Activated naive CD4-positive, alpha-beta T cell treated with anti-CD3 and anti-CD28 coated beads for 36 hours (primary cell): ENCODE measurements at regions of chr10 and their contacts with region 1.

Region 1: GRCh38 chr10:95246579-95247051 is 44.2 kb downstream of the PDLIM1 start:
- DNase-seq: peak; percentile 78
- H3K4me3 Mint-ChIP-seq: no peak overlapping the region
- H3K27ac Mint-ChIP-seq: no peak overlapping the region
- H3K4me1 Mint-ChIP-seq: no peaks in the 10 kb centered on the region
- H3K27me3 Mint-ChIP-seq: peaks cover 18% of the 10 kb centered on the region

Region 2: GRCh38 chr10:95133016-95133752 is 113.4 kb before region 1 on chr10:
- CTCF ChIA-PET with region 1: interaction called, 16 read pairs
- intact Hi-C with region 1: loop called (anchors 1 kb)
- DNase-seq: peak; percentile 88
- H3K4me3 Mint-ChIP-seq: no peak overlapping the region
- H3K27ac Mint-ChIP-seq: no peak overlapping the region
- H3K4me1 Mint-ChIP-seq: no peaks in the 10 kb centered on the region
- H3K27me3 Mint-ChIP-seq: no peaks in the 10 kb centered on the region

Region 3: DNA sequence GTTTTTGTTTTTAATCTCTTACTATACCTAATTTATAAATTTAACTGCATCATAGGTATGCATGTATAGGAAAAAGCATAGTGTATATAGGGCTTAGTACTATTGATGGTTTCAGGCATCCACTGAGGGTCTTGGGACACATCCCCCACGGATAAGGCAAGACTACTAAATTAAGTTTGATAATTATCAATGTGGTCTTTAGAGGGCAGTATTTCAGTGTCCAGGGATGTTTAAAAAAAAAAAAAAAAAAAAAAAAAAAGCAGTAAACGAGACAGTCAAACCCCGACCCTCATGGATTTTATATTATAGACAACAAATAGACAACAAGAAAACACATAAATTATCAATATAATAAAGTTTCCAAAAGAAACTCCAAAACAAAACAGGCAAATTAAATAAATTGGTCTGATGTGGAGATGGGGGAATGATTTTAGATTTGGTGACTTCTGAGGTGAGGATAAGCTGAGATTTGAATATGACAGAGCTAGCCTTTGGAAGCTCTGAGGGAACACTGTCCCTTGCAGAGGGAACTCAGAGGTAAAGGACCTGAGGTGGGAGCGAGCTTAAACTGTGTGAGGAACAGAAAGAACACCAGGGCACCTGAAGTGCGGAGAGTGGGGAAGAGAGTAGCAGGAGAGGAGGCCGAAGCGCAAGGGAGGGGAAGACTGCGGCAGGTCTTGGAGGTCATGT is 37.8 kb before region 1 on chr10:
- CTCF ChIA-PET with region 1: interaction called, 3 read pairs
- intact Hi-C with region 1: loop called (anchors 1 kb)
- DNase-seq: no peak
- H3K4me3 Mint-ChIP-seq: no peak overlapping the region
- H3K27ac Mint-ChIP-seq: no peak overlapping the region
- H3K4me1 Mint-ChIP-seq: no peaks in the 10 kb centered on the region
- H3K27me3 Mint-ChIP-seq: peaks cover 3% of the 10 kb centered on the region

Region 4: GRCh38 chr10:95346715-95347401 is 100.2 kb after region 1 on chr10:
- CTCF ChIA-PET with region 1: interaction called, 10 read pairs
- intact Hi-C with region 1: no loop called
- DNase-seq: no peak
- H3K4me3 Mint-ChIP-seq: no peak overlapping the region
- H3K27ac Mint-ChIP-seq: no peak overlapping the region
- H3K4me1 Mint-ChIP-seq: no peaks in the 10 kb centered on the region
- H3K27me3 Mint-ChIP-seq: no peaks in the 10 kb centered on the region

Region 5: DNA sequence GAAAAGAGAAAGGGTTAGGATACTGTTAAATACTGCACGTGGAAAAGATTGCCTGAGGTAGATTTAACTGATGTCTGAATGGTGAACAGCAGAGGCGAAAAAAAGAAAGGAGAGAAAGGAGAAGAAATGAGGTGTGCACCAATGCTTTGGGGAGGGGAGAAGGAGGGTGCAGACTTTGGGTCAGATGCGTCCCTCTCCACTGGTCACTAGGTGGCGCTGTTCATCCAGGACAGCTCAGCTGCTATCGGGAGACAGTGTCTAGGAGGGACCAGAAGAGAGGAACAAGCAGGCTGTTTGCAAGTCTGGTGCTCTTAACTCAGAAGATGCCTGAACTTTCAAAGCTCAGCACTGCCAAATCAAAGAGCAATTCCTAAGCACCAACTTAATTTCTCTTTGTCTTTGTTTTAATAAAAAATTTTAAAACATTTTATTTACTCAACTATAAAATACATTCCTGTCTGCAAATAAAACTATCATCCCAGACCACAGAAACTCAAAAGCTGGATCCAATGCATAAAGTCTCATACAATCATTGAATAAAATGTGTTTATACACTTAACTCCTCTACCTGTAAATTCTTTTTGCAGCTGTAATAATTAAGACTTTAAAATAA is 128.1 kb after region 1 on chr10:
- CTCF ChIA-PET with region 1: interaction called, 11 read pairs
- intact Hi-C with region 1: no loop called
- DNase-seq: peak; percentile 85
- H3K4me3 Mint-ChIP-seq: no peak overlapping the region
- H3K27ac Mint-ChIP-seq: no peak overlapping the region
- H3K4me1 Mint-ChIP-seq: peaks cover 3% of the 10 kb centered on the region
- H3K27me3 Mint-ChIP-seq: peaks cover 16% of the 10 kb centered on the region